Gastrocnemius medialis (tissue), 4 donors: ENCODE measurements at regions of chr9 and their contacts with region 1.

Region 1: DNA sequence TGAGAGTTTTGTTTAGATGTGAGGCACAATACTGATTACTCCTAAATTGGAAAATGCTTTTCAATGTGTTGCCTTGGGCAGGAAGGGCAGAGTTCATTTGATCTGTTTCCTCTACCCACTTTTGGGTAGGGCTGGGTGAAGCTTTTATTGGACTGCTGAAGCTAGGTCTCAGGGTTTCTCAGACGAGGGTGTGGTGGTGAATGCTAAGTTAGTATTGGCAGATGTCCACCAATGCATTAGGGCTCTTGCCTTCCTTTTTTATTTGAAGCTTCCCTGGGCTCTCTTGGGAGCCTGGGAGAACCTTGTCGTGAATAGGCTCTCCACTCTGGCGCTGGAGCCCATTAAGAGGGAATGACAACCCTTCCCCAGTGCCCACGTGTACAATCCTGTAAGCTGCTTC is 23.1 kb downstream of the SPTAN1 start:
- DNase-seq: no peak
- ATAC-seq: peak in 1 of 2 donors; percentile 24
- H3K4me3 ChIP-seq: no peak overlapping the region
- H3K27ac ChIP-seq: no peak overlapping the region
- H3K4me1 ChIP-seq: no peaks in the 10 kb centered on the region
- H3K27me3 ChIP-seq: no peaks in the 10 kb centered on the region
- CTCF ChIP-seq: no peak
- POLR2A ChIP-seq: no peak

Region 2: DNA sequence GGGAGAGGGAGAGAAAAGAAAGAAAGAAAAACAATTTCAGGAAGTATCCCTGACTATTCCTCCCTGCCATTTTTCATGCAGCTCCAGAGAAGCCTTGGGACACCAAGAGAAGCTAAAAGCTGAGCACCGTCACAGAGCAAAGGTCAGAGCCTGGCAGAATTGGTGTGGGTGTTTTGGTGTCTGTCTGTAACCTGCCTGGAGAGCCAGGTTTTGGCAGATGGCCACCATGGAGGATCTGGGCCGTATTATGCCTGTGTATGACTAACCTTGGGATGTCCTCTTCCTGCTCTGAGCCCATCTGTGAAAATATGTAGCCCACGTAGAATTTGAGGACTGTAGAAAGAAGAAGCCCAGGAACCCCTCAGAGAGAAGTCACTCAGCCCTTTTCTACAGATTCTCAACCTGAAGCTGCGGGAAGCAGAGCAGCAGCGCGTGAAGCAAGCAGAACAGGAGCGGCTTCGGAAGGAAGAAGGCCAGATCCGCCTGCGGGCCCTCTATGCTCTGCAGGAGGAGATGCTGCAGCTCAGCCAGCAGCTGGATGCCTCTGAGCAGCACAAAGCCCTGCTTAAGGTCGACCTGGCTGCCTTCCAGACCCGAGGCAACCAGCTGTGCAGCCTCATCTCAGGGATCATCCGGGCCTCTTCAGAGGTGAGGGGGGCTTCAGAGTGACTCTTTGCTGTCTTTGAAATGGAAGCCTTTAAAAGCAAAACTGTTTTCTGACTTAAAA is 52.1 kb before region 1 on chr9:
- in situ Hi-C with region 1: no loop called
- intact Hi-C with region 1: loop called (anchors 10 kb)
- DNase-seq: no peak
- ATAC-seq: no peak
- H3K4me3 ChIP-seq: no peak overlapping the region
- H3K27ac ChIP-seq: no peak overlapping the region
- H3K4me1 ChIP-seq: no peaks in the 10 kb centered on the region
- H3K27me3 ChIP-seq: no peaks in the 10 kb centered on the region
- CTCF ChIP-seq: no peak
- POLR2A ChIP-seq: no peak

Region 3: DNA sequence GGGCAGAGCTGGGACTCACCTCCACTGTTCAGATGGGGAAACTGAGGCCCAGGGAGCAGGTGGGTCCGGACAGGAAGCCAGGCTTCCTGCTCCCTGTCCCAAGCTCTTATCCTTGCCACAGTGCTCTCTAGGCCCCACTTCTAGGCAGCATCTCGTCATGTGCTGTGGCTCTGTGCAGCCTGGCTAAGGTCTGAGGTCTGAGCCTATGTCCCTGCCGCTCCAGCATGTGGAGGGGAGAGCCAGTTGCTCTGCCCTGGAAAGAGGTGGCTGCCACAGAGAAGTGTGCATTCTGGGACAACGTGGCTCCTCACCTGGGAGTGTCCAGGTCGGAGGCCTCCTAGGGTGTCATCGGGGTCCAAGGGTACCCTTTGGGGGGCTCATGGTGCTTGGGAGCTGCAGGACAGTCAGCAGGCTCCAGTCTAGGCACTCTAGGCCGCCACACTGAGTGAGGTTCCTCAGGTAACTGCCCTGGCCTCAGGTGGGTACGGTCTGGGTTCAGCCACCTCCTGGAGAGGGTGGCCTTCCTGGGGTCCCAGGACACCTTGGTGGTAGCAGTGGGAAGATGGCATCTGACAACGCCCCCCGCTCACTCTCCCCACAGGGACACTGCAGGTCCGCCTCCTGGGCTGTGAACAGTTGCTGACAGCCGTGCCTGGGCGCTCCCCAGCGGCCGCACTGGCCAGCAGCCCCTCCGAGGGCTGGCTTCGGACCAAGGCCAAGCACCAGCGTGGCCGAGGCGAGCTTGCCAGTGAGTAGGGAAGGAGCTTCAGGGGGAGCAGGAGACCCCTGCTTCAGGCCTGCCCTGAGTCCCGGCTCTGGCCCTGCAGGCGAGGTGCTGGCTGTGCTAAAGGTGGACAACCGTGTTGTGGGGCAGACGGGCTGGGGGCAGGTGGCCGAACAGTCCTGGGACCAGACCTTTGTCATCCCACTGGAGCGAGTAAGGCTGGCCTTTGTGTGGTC is 137.3 kb after region 1 on chr9:
- in situ Hi-C with region 1: no loop called
- intact Hi-C with region 1: no loop called
- DNase-seq: no peak
- ATAC-seq: no peak
- H3K4me3 ChIP-seq: no peak overlapping the region
- H3K27ac ChIP-seq: no peak overlapping the region
- H3K4me1 ChIP-seq: no peaks in the 10 kb centered on the region
- H3K27me3 ChIP-seq: no peaks in the 10 kb centered on the region
- CTCF ChIP-seq: no peak
- POLR2A ChIP-seq: no peak

Region 4: DNA sequence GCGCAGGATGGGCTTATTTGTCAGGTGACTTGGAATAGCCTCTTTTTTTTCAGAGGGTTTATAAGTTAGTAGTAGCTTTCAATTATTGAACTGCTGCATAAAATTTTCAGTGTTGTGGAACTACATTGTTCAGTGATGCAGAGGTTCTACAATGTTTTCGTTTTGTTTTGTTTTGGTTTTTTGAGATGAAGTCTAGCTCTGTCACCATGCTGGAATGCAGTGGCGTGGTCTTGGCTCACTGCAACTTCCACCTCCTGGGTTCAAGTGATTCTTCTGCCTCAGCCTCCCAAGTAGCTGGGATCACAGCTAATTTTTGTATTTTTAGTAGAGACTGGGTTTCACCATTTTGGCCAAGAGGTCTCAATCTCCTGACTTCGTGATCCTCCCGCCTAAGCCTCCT is 394.0 kb after region 1 on chr9:
- in situ Hi-C with region 1: no loop called
- intact Hi-C with region 1: loop called (anchors 10 kb)
- DNase-seq: no peak
- ATAC-seq: no peak
- H3K4me3 ChIP-seq: no peak overlapping the region
- H3K27ac ChIP-seq: no peak overlapping the region
- H3K4me1 ChIP-seq: no peaks in the 10 kb centered on the region
- H3K27me3 ChIP-seq: no peaks in the 10 kb centered on the region
- CTCF ChIP-seq: no peak
- POLR2A ChIP-seq: no peak

Region 5: DNA sequence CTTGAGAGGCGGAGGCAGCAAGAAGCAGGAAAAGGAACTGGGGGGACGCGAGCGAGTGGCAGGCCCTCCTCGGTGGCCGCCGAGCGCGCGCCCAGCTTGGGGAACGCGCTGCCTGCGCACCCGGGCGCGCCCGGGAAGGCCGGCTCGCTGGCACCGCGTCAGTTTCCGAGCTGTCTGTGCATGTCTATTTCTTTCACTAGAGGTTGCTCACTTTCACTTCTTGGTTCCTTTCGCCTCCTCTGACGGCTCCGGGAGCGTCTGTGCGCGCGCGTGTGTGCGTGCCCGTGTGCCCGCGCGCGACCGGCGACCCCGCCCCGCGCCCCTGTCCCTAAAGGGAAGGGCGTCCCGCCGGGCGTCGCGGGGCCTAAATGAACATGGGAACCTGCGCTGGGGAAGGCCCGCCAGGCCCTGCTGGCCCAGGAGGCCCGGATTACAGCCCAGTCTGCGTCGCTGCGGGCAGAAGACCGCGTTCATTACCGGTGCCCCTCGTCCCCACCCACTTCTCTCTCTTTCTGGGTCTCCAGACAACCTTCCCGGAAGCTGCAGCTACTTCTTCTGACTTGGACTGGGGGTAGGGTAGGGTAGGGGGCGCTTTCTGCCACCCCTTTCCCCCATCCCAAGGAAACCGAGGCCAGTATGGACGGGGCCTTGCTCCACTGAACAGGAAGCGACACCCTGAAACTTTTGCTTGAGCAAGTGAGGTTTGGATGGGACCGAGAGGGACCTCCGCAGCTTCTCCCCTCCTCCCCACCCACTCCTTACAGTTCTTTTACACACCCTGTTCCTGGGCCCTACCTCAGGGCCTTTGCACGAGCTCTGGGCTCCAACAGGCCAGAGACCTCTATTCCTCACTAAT is 808.3 kb after region 1 on chr9:
- in situ Hi-C with region 1: no loop called
- intact Hi-C with region 1: no loop called
- DNase-seq: peak; percentile 57 to 72
- ATAC-seq: peak; percentile 85 to 89
- H3K4me3 ChIP-seq: peak overlapping the region; percentile 63 to 98 (median 71)
- H3K27ac ChIP-seq: peak overlapping the region; percentile 83 to 94 (median 88)
- H3K4me1 ChIP-seq: peaks cover 8 to 17% of the 10 kb centered on the region in 2 donors
- H3K27me3 ChIP-seq: no peaks in the 10 kb centered on the region
- CTCF ChIP-seq: peak in 2 of 5 experiments; percentile 5 to 7
- POLR2A ChIP-seq: peak in 1 of 2 donors; percentile 47